ENCODE measurements at regions of chr10 and their contacts with region 1.

Region 1: DNA sequence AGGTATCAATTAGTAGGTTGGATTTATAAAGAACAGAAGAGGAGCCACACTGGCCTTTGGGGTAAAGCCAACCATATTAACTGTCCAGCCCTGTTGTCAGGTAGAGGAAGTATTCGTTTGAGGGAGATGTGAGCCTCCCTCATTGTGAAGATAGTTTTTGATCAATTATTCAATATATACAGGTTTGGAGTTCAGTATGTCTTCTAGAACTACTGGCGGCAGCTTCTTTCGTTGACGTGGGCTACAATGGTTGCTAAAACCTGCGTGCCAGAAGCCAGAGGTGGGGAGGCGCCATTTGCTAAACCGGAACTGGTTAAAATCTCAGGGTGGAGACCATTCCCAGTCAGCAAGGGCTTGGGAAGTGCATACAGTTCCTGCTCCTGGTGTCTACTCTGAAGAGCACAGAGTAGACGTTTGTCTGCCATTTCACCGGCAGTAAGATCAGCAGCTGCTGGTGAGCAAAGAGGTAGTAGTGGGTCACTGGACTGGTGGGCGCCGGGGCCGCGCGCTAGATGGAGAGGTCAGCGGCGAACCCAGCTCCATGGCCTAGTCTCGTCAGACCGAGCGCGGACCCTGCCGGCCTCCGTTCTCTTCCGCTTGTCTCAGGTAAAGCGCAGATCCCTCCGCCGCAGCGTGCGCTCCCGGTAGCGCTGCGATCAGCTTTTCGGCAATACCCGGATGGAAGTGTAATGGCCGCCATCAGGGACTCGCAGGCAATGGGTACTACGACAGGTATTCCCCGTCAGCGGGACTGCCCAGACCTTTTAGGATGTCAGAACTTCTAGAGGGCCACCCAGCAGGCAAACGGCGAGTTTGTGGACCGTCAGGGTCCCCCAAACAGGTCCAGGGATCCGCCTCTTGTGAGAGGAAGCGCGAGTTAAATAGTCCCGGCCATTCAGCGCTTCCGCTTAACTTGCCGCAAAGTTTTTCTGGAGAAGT is at the start of gene ZNF518A:
- DNase-seq: peak; percentile 80 to 97 (median 88)
- ATAC-seq: peak; percentile 82
- H3K4me3 ChIP-seq: peak within 1 kb of the TSS; percentile 92 to 93
- H3K4me3 Mint-ChIP-seq: peak within 1 kb of the TSS; percentile 96
- H3K27ac ChIP-seq: peak within 1 kb of the TSS; percentile 98 to 99
- H3K27ac Mint-ChIP-seq: peak within 1 kb of the TSS; percentile 99
- H3K4me1 ChIP-seq: peaks cover 19% of the 10 kb centered on the region
- H3K4me1 Mint-ChIP-seq: peaks cover 25% of the 10 kb centered on the region
- H3K27me3 ChIP-seq: peaks cover 2 to 7% of the 10 kb centered on the region in 2 experiments
- H3K27me3 Mint-ChIP-seq: peaks cover 37% of the 10 kb centered on the region
- CTCF ChIP-seq: no peak
- total RNA-seq, gene ZNF518A: 8.7 to 9.3 TPM

Region 2: DNA sequence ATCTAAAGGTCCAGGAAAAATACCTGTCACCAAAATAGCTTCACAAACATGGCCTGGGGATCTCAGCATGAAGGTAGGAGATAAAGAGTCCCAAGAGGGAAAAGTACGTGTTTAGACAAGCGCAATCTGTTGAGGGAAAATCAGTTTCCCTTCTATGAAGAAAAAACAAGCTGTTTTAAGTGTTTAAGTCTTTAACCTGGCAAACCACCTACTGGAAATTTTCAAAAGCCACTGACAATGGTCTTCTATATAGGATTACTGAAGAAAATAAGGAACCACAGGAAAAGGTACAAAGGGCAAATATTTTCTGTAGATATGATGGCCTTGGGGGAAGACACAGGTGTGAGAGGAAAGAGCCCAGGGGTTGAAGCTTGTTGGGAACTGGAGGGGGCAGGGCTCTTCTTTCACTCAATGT is 494.3 kb before region 1 on chr10:
- CTCF ChIA-PET with region 1: no interaction called
- POLR2A ChIA-PET with region 1: no interaction called
- intact Hi-C with region 1: no loop called
- DNase-seq: no peak
- ATAC-seq: no peak
- H3K4me3 ChIP-seq: no peak overlapping the region
- H3K4me3 Mint-ChIP-seq: no peak overlapping the region
- H3K27ac ChIP-seq: no peak overlapping the region
- H3K27ac Mint-ChIP-seq: peak overlapping the region; percentile 1
- H3K4me1 ChIP-seq: no peaks in the 10 kb centered on the region
- H3K4me1 Mint-ChIP-seq: no peaks in the 10 kb centered on the region
- H3K27me3 ChIP-seq: no peaks in the 10 kb centered on the region
- H3K27me3 Mint-ChIP-seq: no peaks in the 10 kb centered on the region
- CTCF ChIP-seq: no peak

Region 3: GRCh38 chr10:95656291-95657164 is 473.1 kb before region 1 on chr10 and contains the start of gene ALDH18A1:
- CTCF ChIA-PET with region 1: interaction called, 3 read pairs
- POLR2A ChIA-PET with region 1: interaction called, 3 read pairs
- intact Hi-C with region 1: loop called in 1 of 2 experiments (anchors 1 kb)
- DNase-seq: peak; percentile 85 to 97 (median 91)
- ATAC-seq: peak; percentile 95
- H3K4me3 ChIP-seq: peak within 1 kb of the TSS; percentile 79 to 82
- H3K4me3 Mint-ChIP-seq: peak within 1 kb of the TSS; percentile 99
- H3K27ac ChIP-seq: peak within 1 kb of the TSS; percentile 40 to 52
- H3K27ac Mint-ChIP-seq: peak within 1 kb of the TSS; percentile 84
- H3K4me1 ChIP-seq: peaks cover 13% of the 10 kb centered on the region
- H3K4me1 Mint-ChIP-seq: peaks cover 29% of the 10 kb centered on the region
- H3K27me3 ChIP-seq: no peaks in the 10 kb centered on the region
- H3K27me3 Mint-ChIP-seq: no peaks in the 10 kb centered on the region
- CTCF ChIP-seq: no peak
- total RNA-seq, gene ALDH18A1: 8.3 to 11.4 TPM

Region 4: DNA sequence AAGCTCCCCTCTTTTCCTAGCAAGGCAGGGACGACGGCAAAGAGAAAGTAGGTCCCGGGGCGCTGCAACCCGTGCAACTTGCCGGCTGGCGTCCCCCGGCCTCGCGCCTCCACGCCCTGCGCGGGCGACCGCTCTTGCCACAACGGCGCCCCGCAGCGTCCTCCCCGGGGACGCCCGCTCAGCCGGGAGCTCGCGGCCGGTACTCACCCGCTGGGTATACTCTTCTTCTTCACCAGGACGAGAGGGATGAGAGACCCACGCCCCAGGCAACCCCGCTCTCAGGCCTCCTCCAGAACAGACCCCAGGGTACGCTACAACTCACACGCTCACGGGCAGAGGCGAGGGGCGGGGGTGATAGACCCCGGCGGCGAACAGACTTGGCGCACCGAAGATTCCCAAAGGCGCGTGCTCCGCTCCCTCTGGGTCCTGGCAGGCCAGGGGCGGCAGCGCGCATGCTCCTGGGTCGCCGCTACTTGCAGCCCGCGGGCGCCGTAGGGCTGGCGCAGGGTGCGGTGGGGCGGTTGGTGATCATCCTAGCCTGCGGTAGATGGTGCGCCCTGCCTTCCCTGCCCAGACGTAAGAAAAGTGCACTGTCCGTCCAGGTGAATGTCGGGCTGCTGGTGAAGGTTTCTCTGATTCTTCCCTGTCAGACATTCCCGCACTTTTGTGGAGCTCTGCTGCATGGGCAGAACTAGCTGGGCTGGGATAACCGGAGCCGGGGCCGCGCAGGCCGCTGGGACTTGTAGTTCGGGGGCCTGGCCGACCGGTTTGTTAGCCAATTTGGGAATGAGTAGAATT is 222.0 kb before region 1 on chr10 and contains the start of gene CC2D2B:
- CTCF ChIA-PET with region 1: no interaction called
- POLR2A ChIA-PET with region 1: no interaction called
- intact Hi-C with region 1: loop called (anchors 5 to 10 kb)
- DNase-seq: peak; percentile 21 to 79 (median 59)
- ATAC-seq: peak; percentile 72
- H3K4me3 ChIP-seq: peak within 1 kb of the TSS; percentile 77 to 82
- H3K4me3 Mint-ChIP-seq: peak within 1 kb of the TSS; percentile 90
- H3K27ac ChIP-seq: peak within 1 kb of the TSS; percentile 61 to 67
- H3K27ac Mint-ChIP-seq: peak within 1 kb of the TSS; percentile 83
- H3K4me1 ChIP-seq: no peaks in the 10 kb centered on the region
- H3K4me1 Mint-ChIP-seq: peaks cover 18% of the 10 kb centered on the region
- H3K27me3 ChIP-seq: no peaks in the 10 kb centered on the region
- H3K27me3 Mint-ChIP-seq: no peaks in the 10 kb centered on the region
- CTCF ChIP-seq: no peak
- total RNA-seq, gene CC2D2B: not detected

Region 5: DNA sequence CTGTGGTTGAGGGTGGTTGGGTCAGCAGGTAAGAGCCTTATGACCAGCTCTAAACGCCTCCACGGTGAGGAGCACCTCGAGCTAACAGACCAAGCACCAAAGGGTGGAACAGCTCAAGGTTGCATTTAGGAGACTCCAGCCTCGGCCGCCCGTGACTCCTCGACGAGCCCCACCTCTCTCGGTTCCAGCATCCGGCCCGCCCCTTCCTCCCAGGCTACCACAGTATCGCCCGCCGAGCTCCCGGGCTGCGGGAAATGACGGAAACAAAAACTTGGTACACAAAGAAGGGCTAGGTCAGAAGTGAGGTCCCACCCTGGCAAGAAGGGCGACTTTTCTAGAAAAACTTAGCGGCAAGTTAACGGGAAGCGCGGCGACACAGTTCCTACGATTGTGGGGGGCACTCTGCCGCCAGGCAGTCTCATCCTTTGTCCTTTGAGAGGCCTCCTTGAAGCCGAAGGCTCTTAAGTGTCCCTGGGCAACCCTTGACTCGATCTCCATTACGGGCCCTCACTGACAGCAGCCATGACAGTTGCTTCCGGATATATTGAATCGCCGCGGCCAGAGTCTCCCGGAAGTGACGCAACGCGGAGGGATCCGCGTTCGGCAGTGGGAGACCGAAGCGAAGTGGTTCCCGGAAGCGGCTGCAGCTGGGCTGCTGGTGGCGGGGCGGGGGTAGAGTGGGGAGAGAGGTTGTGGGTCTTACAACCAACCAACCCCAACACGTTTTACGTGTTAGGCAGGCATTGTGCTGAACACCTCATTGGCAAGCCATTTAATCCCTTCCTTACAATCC is 39.8 kb before region 1 on chr10:
- CTCF ChIA-PET with region 1: interaction called, 23 read pairs
- POLR2A ChIA-PET with region 1: interaction called, 152 read pairs
- intact Hi-C with region 1: loop called (anchors 1 kb)
- DNase-seq: peak; percentile 85 to 98 (median 92)
- ATAC-seq: peak; percentile 87
- H3K4me3 ChIP-seq: peak overlapping the region; percentile 69 to 71
- H3K4me3 Mint-ChIP-seq: peak overlapping the region; percentile 95
- H3K27ac ChIP-seq: peak overlapping the region; percentile 91 to 97
- H3K27ac Mint-ChIP-seq: peak overlapping the region; percentile 99
- H3K4me1 ChIP-seq: peaks cover 6% of the 10 kb centered on the region
- H3K4me1 Mint-ChIP-seq: peaks cover 12% of the 10 kb centered on the region
- H3K27me3 ChIP-seq: no peaks in the 10 kb centered on the region
- H3K27me3 Mint-ChIP-seq: peaks cover 21% of the 10 kb centered on the region
- CTCF ChIP-seq: no peak

Region 6: GRCh38 chr10:97659589-97659988 is 1529.9 kb after region 1 on chr10:
- CTCF ChIA-PET with region 1: no interaction called
- POLR2A ChIA-PET with region 1: no interaction called
- intact Hi-C with region 1: loop called in 1 of 2 experiments (anchors 10 kb)
- DNase-seq: no peak
- ATAC-seq: no peak
- H3K4me3 ChIP-seq: no peak overlapping the region
- H3K4me3 Mint-ChIP-seq: no peak overlapping the region
- H3K27ac ChIP-seq: no peak overlapping the region
- H3K27ac Mint-ChIP-seq: no peak overlapping the region
- H3K4me1 ChIP-seq: no peaks in the 10 kb centered on the region
- H3K4me1 Mint-ChIP-seq: no peaks in the 10 kb centered on the region
- H3K27me3 ChIP-seq: no peaks in the 10 kb centered on the region
- H3K27me3 Mint-ChIP-seq: no peaks in the 10 kb centered on the region
- CTCF ChIP-seq: no peak